CD4-positive, alpha-beta memory T cell (primary cell): ENCODE measurements at regions of chr5 and their contacts with region 1.

Region 1: GRCh38 chr5:179060116-179061008 is at the start of gene ZNF354C:
- DNase-seq: peak; percentile 82 to 86 (median 84)
- H3K4me3 ChIP-seq: peak within 1 kb of the TSS; percentile 54 to 61
- H3K4me3 Mint-ChIP-seq: peak within 1 kb of the TSS; percentile 90 to 99 (median 94)
- H3K27ac ChIP-seq: peak within 1 kb of the TSS; percentile 70
- H3K27ac Mint-ChIP-seq: peak within 1 kb of the TSS; percentile 82 to 96 (median 94)
- H3K4me1 ChIP-seq: peaks cover 14% of the 10 kb centered on the region
- H3K4me1 Mint-ChIP-seq: peaks cover 14 to 36% (median 27%) of the 10 kb centered on the region in 4 donors
- H3K27me3 ChIP-seq: no peaks in the 10 kb centered on the region
- H3K27me3 Mint-ChIP-seq: peaks cover 0 to 1% of the 10 kb centered on the region in 2 donors
- total RNA-seq, gene ZNF354C: 11.2 to 11.3 TPM

Region 2: GRCh38 chr5:179023528-179024430 is 36.6 kb before region 1 on chr5 and contains the start of gene ZNF879:
- CTCF ChIA-PET with region 1: interaction called, 4 read pairs
- POLR2A ChIA-PET with region 1: interaction called, 30 read pairs
- intact Hi-C with region 1: loop called (anchors 1 kb)
- DNase-seq: peak; percentile 93 to 95 (median 94)
- H3K4me3 ChIP-seq: peak within 1 kb of the TSS; percentile 54 to 61
- H3K4me3 Mint-ChIP-seq: peak within 1 kb of the TSS; percentile 92 to 99 (median 96)
- H3K27ac ChIP-seq: peak within 1 kb of the TSS; percentile 66
- H3K27ac Mint-ChIP-seq: peak within 1 kb of the TSS; percentile 82 to 95 (median 93)
- H3K4me1 ChIP-seq: peaks cover 13% of the 10 kb centered on the region
- H3K4me1 Mint-ChIP-seq: peaks cover 8 to 20% (median 11%) of the 10 kb centered on the region in 4 donors
- H3K27me3 ChIP-seq: no peaks in the 10 kb centered on the region
- H3K27me3 Mint-ChIP-seq: peaks cover 2 to 3% of the 10 kb centered on the region in 2 donors
- total RNA-seq, gene ZNF879: 15.9 to 16.3 TPM